H1 (cell line): ENCODE measurements at regions of chr18 and their contacts with region 1.

Region 1: GRCh38 chr18:74342416-74343043 is 26.9 kb downstream of the C18orf63 start:
- DNase-seq: no peak
- H3K4me3 ChIP-seq: no peak overlapping the region
- H3K27ac ChIP-seq: no peak overlapping the region
- H3K4me1 ChIP-seq: no peaks in the 10 kb centered on the region
- H3K27me3 ChIP-seq: no peaks in the 10 kb centered on the region
- CTCF ChIP-seq: peak in 2 of 3 experiments; percentile 43 to 51; a peak in 2 of 4 replicates
- EP300 ChIP-seq: no peak
- POLR2A ChIP-seq: no peak
- RAD21 ChIP-seq: peak; percentile 69 to 84

Region 2: DNA sequence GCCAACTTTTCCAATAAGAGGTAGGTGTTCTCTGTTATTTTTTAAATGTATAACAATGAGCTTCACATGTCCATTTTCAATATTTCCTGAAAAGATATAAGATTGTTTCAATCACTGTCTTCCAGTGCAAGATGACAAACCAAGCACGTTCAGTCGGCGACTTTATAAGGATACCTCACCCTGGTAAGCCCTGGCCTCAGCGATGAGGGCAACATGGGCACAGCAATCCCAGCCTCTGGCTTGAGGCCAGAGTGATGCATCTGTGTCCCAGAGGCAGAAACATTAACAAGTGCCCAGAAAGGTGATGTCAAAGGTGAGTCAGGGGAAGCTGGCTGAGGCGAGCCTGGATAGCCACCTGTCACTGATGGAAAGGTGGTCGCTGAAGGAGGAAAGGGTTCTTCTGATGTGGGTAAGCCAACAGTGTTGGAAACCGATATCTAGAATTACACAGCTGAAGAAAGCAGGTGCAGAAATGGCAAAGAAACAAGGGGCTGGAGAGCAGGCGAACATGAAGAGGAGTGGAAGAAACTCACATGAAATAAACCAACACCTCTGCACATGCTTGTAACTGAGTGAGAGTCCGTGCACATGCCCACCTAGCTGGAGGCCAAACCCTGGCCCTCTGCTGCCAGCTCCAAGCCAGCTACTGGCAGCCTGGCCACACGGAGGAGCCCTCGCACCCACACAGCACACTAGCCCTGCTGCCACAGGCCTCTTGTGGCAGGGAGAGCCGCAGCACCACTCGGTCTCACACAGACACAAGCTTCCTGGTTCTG is 260.4 kb before region 1 on chr18:
- CTCF ChIA-PET with region 1: interaction called, 14 read pairs
- POLR2A ChIA-PET with region 1: no interaction called
- DNase-seq: peak; percentile 59 to 77
- H3K4me3 ChIP-seq: no peak overlapping the region
- H3K27ac ChIP-seq: no peak overlapping the region
- H3K4me1 ChIP-seq: no peaks in the 10 kb centered on the region
- H3K27me3 ChIP-seq: no peaks in the 10 kb centered on the region
- CTCF ChIP-seq: peak; percentile 94 to 98 (median 96)
- EP300 ChIP-seq: no peak
- POLR2A ChIP-seq: no peak
- RAD21 ChIP-seq: peak; percentile 78 to 85

Region 3: GRCh38 chr18:74196220-74197119 is 146.1 kb before region 1 on chr18:
- CTCF ChIA-PET with region 1: interaction called, 63 read pairs
- POLR2A ChIA-PET with region 1: interaction called, 4 read pairs
- DNase-seq: no peak
- H3K4me3 ChIP-seq: peak overlapping the region in 1 of 4 experiments; percentile 27; a peak in 1 of 8 replicates
- H3K27ac ChIP-seq: no peak overlapping the region
- H3K4me1 ChIP-seq: peaks cover 0 to 5% (median 2%) of the 10 kb centered on the region in 4 experiments; a peak in 4 of 7 replicates
- H3K27me3 ChIP-seq: no peaks in the 10 kb centered on the region
- CTCF ChIP-seq: peak; percentile 48 to 76 (median 70)
- EP300 ChIP-seq: no peak
- POLR2A ChIP-seq: no peak
- RAD21 ChIP-seq: peak; percentile 89 to 91

Region 4: DNA sequence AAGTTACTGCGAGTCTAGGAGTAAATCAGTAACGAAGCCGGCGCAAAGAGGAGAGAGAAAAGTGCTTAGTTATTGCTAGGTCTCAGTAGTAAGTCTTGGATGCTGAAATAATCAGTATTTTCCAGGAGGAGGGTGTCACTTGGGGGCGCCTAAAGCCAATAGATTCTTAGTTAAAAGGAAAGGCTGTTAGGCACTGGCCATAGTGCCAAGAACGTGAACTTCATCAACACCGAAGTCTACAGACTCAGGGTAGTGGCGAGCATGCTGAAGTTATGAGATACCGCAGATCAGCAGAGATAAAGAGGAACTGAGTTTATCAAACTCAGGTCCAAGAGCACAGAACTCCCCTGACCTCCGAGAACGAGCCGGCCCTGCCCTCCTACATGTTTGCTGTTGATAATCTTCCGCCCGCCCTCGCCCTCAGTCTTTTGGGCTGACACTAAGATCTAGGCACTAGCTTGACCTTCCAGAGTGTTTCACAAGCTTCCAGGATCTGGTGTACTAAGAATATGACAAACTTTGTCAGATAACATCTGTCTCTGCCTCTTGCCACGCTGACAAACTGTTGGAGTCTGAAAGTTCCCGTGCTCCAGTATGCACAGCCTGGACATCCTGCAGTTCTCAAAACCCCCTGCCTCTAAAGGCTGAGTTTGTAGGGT is 100.0 kb before region 1 on chr18:
- CTCF ChIA-PET with region 1: interaction called, 21 read pairs
- POLR2A ChIA-PET with region 1: no interaction called
- DNase-seq: no peak
- H3K4me3 ChIP-seq: no peak overlapping the region
- H3K27ac ChIP-seq: no peak overlapping the region
- H3K4me1 ChIP-seq: peaks cover 0 to 4% (median 0%) of the 10 kb centered on the region in 4 experiments; a peak in 4 of 7 replicates
- H3K27me3 ChIP-seq: no peaks in the 10 kb centered on the region
- CTCF ChIP-seq: peak in 2 of 3 experiments; percentile 22 to 45; a peak in 3 of 4 replicates
- EP300 ChIP-seq: no peak
- POLR2A ChIP-seq: no peak
- RAD21 ChIP-seq: peak; percentile 57 to 66

Region 5: DNA sequence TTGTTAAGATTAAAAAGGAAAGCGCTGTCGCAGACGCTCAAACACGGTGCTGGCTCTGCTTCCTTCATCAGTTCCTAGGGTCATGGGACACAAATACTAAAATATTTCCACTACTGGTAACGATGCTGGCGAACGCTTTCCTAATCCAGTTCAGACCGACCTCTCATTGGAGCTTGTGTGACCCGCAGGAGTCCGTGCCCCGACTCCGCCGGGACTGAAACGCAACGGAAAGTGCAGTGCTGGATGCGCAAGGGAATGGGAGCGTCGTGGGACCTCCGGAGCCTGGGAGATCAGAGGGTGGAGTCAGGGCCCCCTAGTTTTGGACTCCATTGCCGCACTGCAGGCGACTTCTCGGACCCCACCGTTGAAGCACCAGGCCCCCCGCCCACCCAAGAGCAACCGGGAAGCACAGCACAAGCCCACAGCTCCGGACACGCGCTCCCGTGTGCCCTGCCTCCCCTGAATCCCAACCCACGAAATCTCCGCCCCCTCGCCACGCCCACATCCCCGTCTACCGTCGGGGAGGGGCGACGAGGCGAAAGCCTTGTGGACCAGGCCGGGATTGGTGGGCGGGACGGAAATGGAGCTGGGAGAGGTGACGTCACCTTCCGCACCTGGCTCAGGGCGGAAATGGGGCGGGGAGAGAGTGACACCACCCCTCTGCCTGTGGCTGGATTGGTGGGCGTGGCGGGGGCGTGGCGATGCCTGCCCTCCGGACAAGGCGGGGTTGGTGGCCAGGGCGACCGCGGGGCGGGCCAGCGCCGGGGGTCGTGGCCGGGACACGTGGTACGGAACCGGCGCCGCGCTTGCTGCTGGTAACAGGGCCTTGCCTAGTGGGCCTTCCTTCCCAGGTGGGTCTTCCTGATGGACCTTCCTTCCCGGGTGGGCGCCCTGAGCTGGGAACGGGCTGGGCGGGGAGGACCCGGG is 153.3 kb after region 1 on chr18 and contains the start of gene CNDP2:
- CTCF ChIA-PET with region 1: interaction called, 10 read pairs
- POLR2A ChIA-PET with region 1: interaction called, 4 read pairs
- DNase-seq: peak; percentile 96 to 100
- H3K4me3 ChIP-seq: peak within 1 kb of the TSS; percentile 83 to 94 (median 88)
- H3K27ac ChIP-seq: peak within 1 kb of the TSS; percentile 93
- H3K4me1 ChIP-seq: peaks cover 2 to 16% (median 5%) of the 10 kb centered on the region in 4 experiments; a peak in 5 of 7 replicates
- H3K27me3 ChIP-seq: no peaks in the 10 kb centered on the region
- CTCF ChIP-seq: no peak
- EP300 ChIP-seq: no peak; a peak in 1 of 3 replicates
- POLR2A ChIP-seq: peak; percentile 82 to 92
- RAD21 ChIP-seq: no peak
- total RNA-seq, gene CNDP2: 243 TPM in 2 replicates

Region 6: DNA sequence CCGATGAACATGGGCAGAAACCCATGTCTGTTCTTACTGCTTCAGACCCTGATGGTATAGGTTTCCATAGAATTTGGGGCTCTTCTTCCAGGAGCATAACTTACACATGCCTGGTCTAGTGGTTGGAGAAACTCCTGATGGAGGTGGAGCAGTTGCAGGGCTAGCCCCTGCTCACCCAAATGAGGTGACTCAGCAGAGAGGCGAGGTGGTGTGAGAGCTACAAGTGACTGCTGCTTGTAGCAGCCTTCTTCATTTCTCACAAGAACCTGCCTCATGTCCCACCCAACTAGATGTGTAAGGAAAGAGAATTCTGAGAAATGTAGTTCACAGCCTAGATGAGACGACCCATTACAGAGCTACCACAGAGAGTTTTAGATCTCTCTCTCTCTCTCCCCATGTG is 360.4 kb after region 1 on chr18:
- CTCF ChIA-PET with region 1: no interaction called
- POLR2A ChIA-PET with region 1: no interaction called
- DNase-seq: no peak
- H3K4me3 ChIP-seq: no peak overlapping the region
- H3K27ac ChIP-seq: no peak overlapping the region
- H3K4me1 ChIP-seq: peaks cover 0 to 8% (median 4%) of the 10 kb centered on the region in 4 experiments; a peak in 2 of 7 replicates
- H3K27me3 ChIP-seq: peaks cover 0 to 1% (median 0%) of the 10 kb centered on the region in 4 experiments; a peak in 1 of 7 replicates
- CTCF ChIP-seq: no peak
- EP300 ChIP-seq: no peak
- POLR2A ChIP-seq: no peak
- RAD21 ChIP-seq: no peak